ENCODE measurements at regions of chr2 and their contacts with region 1.

Region 1: DNA sequence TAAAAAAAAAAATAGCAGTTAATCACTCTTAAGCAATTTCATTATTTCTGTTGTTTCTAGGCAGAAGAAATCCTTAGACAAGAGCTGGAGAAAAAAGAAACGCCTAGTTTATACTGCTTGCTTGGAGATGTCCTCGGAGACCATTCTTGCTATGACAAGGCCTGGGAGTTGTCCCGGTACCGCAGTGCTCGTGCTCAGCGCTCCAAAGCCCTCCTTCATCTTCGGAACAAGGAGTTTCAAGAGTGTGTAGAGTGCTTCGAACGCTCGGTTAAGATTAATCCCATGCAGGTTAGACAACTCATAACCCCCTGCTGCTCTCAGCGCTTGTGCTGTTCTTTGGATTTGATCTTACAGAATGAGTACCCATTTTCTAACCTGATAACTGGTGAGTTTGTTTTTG is 130.4 kb downstream of the TTC27 start:
- DNase-seq: no peak

Region 2: DNA sequence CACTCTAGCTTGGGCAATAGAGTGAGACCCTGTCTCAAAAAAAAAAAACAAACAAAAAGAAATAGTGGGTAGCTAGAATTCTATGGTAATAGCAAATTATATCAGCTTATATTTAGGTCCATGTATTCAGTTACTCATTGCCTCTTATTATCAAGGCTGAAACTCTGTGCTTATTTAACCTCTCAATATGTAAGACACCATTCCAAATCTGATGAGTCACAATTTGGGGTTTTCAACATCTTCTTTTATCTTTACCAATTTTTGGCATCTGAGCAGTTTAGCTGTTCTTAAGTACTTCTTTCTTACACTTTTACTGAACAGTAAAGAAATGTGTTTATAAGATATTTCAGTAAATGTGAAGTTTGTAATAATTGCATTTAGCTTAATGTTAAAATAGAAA is 61.1 kb before region 1 on chr2:
- intact Hi-C with region 1: no loop called
- DNase-seq: no peak

Region 3: DNA sequence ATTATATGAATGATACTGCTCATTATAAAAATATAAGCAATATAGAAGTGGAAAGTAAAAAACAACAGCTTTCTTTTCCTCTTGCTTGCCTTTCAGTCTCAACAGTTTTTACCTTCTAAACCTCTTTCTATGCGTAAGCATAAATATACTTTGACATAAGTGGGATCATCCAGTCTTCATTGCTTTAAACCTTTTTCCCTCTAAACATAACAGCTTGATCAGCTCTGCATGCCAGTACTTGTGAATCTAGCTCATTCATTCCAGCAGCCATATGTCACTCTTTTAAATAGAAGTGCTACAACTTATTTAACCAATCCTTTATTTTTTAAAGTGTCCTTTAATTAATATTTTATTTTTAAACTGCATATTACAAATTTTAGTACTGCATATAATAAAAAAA is 42.3 kb before region 1 on chr2:
- intact Hi-C with region 1: loop called (anchors 2 kb)
- DNase-seq: no peak

Measured in cardiac septum (tissue), 1 donor.